Astrocyte of the cerebellum (primary cell): ENCODE measurements at regions of chr3 and their contacts with region 1.

Region 1: DNA sequence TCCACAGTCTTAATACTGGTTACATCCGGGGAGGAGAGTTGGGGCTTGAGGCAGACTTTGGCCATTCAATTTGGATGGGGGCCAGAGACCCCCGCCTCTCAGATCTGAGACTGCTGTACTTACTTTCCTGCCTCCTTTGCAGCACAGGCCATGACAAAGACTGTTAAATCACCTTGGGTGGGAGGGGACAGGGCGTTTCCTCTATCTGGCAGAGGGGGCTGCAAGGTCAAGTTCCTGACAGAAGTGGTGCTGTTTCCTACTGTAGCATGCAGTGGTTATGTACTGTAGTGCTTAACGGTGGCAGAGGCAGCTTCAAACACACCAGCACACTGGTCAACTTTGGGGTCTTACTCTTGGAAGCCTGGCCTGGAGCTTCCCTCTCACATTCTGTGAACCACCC is 261.2 kb upstream of the LRRFIP2 start:
- DNase-seq: no peak
- H3K4me3 ChIP-seq: no peak overlapping the region
- CTCF ChIP-seq: no peak

Region 2: GRCh38 chr3:37198996-37199395 is 236.6 kb before region 1 on chr3:
- in situ Hi-C with region 1: no loop called
- DNase-seq: no peak
- H3K4me3 ChIP-seq: no peak overlapping the region
- CTCF ChIP-seq: no peak

Region 3: DNA sequence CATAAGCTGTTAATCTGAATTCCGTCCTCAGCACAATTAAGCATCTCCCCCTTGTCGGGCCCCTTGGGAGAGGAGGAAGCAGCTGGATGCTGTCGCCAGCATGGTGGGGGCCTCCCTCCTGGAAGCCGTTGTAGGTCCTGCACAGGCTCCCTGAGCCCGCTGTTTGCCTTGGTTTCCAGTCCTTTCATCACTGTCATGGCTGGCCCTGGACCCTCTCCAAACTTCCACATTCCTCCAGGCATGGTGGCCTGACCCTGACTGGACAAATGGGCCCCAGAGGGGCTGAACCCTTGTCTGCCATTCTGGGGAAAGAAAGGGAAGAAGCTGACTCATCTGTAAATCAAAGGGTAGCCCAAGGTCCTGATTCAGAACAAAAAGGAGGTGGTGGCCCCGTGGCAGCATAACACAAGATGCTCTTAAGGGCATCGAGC is 39.3 kb after region 1 on chr3:
- in situ Hi-C with region 1: no loop called
- DNase-seq: no peak
- H3K4me3 ChIP-seq: no peak overlapping the region
- CTCF ChIP-seq: no peak

Region 4: DNA sequence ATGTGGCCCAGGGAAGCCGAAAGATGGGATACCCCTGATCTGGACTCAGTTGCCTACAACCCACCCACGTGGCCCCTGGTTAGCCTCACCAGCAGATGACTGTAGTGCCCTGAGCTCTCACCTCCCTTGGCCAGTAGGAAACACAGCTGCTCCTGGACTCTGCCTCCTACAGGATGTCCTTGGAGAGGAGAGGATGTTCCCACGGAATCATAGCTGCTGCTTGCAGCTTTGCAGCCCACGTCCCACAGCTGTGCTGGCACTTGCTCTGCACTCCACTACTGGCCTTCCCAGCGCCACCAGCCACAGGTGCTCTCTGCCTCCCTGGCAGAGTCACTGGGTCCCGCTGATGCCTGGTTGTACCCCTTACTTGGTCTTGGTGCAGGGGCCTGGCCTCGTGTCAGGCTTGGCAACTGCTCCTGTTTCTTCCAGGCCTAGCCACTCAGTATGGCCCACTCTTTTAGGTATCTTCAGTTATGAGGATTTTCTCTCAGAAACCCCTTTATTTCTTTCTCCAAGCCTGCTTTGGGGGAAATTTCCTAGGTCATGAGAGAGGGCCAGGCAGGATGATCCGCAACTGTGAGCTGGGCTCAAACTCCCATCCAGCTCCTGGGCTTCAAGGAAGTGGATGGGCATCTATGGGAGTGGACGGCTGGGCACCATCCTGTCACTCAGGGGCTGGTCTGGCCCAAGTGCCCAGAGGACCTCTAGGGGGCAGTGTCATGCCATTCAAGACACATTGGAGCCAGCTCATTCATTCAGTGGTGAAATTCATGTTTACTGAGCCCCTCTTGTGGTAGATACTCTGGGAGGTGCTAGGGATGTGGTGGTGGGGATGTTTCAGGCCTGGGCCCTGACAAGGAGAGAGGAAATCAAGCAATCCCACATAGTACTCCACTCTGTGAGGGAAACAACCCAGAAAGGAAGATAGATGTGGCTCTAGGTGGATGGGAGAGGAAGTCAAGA is 538.8 kb after region 1 on chr3:
- in situ Hi-C with region 1: loop called (anchors 25 kb)
- DNase-seq: peak; percentile 39
- H3K4me3 ChIP-seq: no peak overlapping the region
- CTCF ChIP-seq: peak; percentile 84